ENCODE measurements at regions of chr10 and their contacts with region 1.

Region 1: DNA sequence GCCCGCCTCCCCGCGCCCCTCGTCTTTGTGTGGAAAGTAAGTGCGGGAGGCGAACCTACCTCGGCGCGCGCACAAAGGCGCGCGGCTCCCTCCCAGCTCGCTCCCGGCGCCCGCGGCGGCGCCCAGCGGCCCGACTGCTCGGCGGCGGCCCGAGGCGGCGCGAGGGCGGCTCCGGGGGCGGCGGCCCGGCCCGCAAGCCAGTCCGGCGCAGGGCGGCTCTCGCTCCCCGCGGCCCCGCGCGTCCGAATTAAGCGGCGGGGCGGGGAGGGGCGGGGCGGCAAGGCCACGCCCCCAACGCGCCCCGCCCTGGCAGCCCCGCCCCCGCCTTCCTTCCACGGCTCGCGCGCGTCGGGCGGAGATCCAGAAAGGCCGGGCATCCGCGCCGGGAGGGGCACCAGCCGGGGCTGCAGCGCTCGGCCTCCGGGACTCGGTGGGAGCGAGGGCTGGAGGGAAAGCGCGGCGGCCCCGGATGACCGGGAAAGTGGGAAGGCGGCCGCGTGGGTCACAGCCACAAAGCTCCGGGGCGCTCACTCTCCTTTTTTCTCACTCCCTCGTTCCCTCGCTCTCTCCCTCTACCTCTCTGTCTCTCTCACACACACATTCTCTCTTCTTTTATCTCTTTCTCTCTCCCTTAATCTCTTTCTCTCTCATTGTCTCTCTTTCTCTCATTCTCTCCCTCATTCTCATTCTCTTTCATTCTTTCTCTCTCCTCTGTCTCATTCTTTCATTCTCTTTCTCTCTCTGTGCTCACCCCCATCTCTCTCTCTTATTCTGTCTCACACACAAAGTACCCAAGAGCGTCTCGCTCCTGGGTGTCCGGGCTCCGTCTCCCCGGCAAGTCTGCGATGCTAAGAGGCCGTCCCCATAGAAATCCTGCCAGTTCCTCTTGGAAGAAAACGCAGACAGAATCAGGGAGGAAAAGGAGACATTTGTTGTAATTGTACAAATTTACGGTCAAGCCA is 170.2 kb downstream of the FAM107B start:
- DNase-seq: peak; percentile 88
- H3K4me3 ChIP-seq: peak overlapping the region; percentile 81
- H3K27ac ChIP-seq: peak overlapping the region; percentile 4
- H3K4me1 ChIP-seq: peaks cover 65% of the 10 kb centered on the region
- CTCF ChIP-seq: no peak

Region 2: GRCh38 chr10:14523286-14523685 is 81.2 kb before region 1 on chr10:
- CTCF ChIA-PET with region 1: no interaction called
- POLR2A ChIA-PET with region 1: no interaction called
- intact Hi-C with region 1: no loop called
- DNase-seq: no peak
- H3K4me3 ChIP-seq: no peak overlapping the region
- H3K27ac ChIP-seq: no peak overlapping the region
- H3K4me1 ChIP-seq: no peaks in the 10 kb centered on the region
- CTCF ChIP-seq: no peak

Region 3: GRCh38 chr10:14564268-14564744 is 40.2 kb before region 1 on chr10:
- CTCF ChIA-PET with region 1: no interaction called
- POLR2A ChIA-PET with region 1: no interaction called
- intact Hi-C with region 1: loop called (anchors 2 kb)
- DNase-seq: no peak
- H3K4me3 ChIP-seq: peak overlapping the region; percentile 40
- H3K27ac ChIP-seq: peak overlapping the region; percentile 30
- H3K4me1 ChIP-seq: peaks cover 72% of the 10 kb centered on the region
- CTCF ChIP-seq: no peak

Region 4: GRCh38 chr10:14659626-14660196 is 55.2 kb after region 1 on chr10:
- CTCF ChIA-PET with region 1: no interaction called
- POLR2A ChIA-PET with region 1: no interaction called
- intact Hi-C with region 1: loop called (anchors 1 kb)
- DNase-seq: peak; percentile 94
- H3K4me3 ChIP-seq: peak overlapping the region; percentile 46
- H3K27ac ChIP-seq: peak overlapping the region; percentile 96
- H3K4me1 ChIP-seq: peaks cover 73% of the 10 kb centered on the region
- CTCF ChIP-seq: no peak

Region 5: DNA sequence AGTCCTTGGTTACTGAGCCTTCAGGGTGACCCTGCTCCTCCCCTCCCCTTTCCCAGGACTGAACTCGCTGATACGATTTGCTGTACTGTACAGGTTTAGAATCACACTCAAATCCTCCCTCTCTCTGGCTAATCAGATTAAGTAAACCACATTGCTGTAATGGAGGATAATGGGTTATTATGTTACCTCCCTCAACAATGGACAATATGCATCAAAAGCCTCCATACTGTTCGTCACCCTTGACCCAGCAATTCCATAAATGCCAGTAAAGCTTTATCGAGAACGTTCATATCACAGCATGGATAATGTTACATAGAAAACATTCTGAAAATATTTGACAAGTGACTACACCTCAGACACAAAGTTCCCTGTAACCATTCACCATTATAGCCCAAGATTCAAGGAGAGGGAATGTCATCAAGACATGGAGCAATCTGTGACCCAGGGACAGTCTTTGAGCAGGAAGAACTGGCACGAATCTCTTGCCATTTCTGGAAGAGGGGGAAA is 108.6 kb after region 1 on chr10:
- CTCF ChIA-PET with region 1: no interaction called
- POLR2A ChIA-PET with region 1: no interaction called
- intact Hi-C with region 1: no loop called
- DNase-seq: no peak
- H3K4me3 ChIP-seq: no peak overlapping the region
- H3K27ac ChIP-seq: no peak overlapping the region
- H3K4me1 ChIP-seq: no peaks in the 10 kb centered on the region
- CTCF ChIP-seq: no peak

Region 6: DNA sequence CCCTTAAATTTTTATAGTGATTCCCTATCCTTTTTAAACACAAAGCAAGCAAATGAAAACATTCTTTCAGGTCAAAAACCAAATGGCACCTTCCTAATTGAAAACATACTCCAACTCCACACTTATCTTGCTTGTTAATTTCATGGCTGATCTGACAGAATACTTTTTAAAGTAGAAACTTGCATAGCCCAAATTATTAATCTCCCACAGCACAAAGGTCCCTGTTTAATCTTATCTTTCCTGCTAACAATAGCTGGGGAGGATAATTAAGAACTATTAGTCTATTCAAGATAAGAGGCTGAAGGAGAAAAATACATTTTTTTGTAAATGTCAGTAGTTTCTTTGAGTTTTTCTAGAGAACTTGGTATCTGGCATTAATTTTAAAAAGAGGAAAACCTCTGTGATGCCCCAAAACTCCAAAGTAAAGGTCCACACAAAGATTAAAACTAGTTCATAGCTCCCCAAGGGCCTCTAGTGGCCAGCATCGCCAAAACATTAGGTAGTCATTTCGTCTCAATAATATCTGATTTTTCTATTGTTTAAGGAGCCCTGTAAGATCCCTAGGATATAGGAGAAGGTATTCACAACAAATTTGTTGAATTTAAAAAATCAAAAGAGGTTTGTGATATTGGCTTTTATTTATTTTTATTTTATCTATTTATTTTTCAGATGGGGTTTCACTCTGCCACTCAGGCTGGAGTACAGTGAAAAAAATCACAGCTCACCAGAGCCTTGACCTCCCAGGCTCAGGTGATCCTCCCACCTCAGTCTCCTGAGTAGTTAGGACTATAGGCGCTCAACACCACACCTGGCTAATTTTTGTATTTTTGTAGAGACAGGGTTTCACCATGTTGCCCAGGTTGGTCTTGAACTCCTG is 218.7 kb after region 1 on chr10:
- CTCF ChIA-PET with region 1: no interaction called
- POLR2A ChIA-PET with region 1: interaction called, 6 read pairs
- intact Hi-C with region 1: loop called (anchors 2 kb)
- DNase-seq: peak; percentile 80
- H3K4me3 ChIP-seq: no peak overlapping the region
- H3K27ac ChIP-seq: no peak overlapping the region
- H3K4me1 ChIP-seq: peaks cover 28% of the 10 kb centered on the region
- CTCF ChIP-seq: peak; percentile 99

Region 7: GRCh38 chr10:14878266-14879054 is 274.0 kb after region 1 on chr10 and contains the start of gene SUV39H2:
- CTCF ChIA-PET with region 1: no interaction called
- POLR2A ChIA-PET with region 1: interaction called, 4 read pairs
- intact Hi-C with region 1: loop called (anchors 5 kb)
- DNase-seq: peak; percentile 96
- H3K4me3 ChIP-seq: peak within 1 kb of the TSS; percentile 88
- H3K27ac ChIP-seq: peak within 1 kb of the TSS; percentile 61
- H3K4me1 ChIP-seq: peaks cover 42% of the 10 kb centered on the region
- CTCF ChIP-seq: no peak
- total RNA-seq, gene SUV39H2: 31.5 and 43.4 TPM in 2 replicates